ENCODE measurements at regions of chr4 and their contacts with region 1.

Region 1: GRCh38 chr4:42995343-42995944 is 102.9 kb downstream of the GRXCR1 start:
- DNase-seq: no peak
- H3K4me3 Mint-ChIP-seq: no peak overlapping the region
- H3K27ac Mint-ChIP-seq: no peak overlapping the region
- H3K4me1 Mint-ChIP-seq: no peaks in the 10 kb centered on the region
- H3K27me3 Mint-ChIP-seq: no peaks in the 10 kb centered on the region

Region 2: DNA sequence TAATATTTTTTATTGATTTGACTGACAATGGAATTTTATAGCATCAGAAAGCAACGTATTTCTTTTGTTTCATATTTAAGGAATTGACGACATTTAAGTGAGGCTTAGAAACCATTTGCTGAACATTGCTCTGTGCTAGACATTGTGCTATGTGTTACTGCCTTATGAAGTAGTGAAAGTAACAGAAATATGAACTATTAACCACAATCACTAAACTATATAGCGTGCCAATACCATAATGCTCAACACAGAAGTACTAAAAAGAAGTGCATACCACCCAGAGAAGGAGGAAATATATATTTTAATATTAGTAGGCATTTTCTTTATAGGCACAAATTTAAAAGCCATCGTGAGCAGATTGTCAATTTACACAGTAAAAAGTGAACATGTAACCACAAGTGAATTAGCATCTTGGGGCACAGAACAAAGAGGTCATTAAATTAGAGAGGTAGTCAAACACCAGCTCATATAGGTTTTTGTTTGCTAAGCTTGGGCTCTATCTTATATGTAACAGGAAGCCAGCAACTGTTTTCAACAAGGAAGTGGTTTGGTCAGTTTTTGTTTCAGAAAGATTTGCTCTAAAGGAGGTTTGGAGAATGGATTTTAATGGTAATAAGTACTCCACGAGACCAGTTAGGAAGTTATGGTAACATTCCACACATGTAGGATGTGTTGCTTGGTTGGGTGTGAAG is 167.8 kb after region 1 on chr4:
- intact Hi-C with region 1: no loop called
- DNase-seq: no peak
- H3K4me3 Mint-ChIP-seq: no peak overlapping the region
- H3K27ac Mint-ChIP-seq: no peak overlapping the region
- H3K4me1 Mint-ChIP-seq: no peaks in the 10 kb centered on the region
- H3K27me3 Mint-ChIP-seq: no peaks in the 10 kb centered on the region

Region 3: GRCh38 chr4:44629280-44629866 is 1633.9 kb after region 1 on chr4:
- intact Hi-C with region 1: loop called (anchors 2 kb)
- DNase-seq: peak; percentile 13
- H3K4me3 Mint-ChIP-seq: no peak overlapping the region
- H3K27ac Mint-ChIP-seq: no peak overlapping the region
- H3K4me1 Mint-ChIP-seq: no peaks in the 10 kb centered on the region
- H3K27me3 Mint-ChIP-seq: no peaks in the 10 kb centered on the region